ENCODE measurements at regions of chr5 and their contacts with region 1.

Region 1: DNA sequence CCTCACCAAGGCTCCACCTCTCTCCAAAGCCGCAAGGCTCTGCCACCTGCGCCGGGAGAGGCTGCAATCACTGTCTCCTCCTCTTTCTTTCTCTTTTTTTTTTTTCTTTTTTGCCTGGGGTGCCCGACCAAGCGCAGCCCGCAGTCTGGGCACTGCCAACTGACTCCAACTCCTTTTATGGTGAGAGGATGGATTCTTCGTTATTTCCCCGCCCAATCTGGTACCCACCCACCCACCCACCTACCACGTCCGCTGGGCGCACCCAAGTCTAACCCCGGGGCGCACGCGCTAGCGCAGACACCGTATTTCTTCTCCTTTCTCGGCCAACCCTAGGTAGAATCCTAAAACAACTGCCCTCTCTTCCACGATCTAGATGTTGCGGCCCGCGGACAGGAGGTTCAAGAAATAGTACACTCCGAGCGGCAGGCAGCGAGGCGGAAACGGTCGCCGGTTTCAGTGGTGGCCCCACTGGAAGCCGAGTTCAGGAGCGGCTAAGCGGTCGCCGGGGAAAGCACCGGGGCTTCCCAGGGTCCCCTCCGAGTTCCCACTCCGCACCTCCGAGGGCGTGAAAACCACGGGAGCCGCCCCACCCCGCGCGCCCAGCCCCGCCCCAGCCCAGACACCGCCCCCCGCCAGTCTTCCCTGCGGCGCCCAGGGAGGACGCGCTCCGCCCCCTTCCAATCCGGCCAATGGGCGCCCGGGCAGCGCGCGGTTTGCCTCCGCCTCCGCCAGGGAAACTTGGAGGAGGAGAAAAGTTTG is 381 bp upstream of the PTGER4 start:
- DNase-seq: peak; percentile 97
- H3K4me3 ChIP-seq: peak overlapping the region; percentile 68 to 86 (median 86)
- H3K27ac ChIP-seq: peak overlapping the region; percentile 95
- H3K4me1 ChIP-seq: peaks cover 56% of the 10 kb centered on the region
- H3K27me3 ChIP-seq: no peaks in the 10 kb centered on the region
- CTCF ChIP-seq: no peak

Region 2: GRCh38 chr5:39948867-39949468 is 730.4 kb before region 1 on chr5:
- CTCF ChIA-PET with region 1: no interaction called
- dilution Hi-C with region 1: no loop called
- in situ Hi-C with region 1: loop called in 1 of 2 experiments (anchors 5 kb)
- intact Hi-C with region 1: no loop called
- DNase-seq: peak; percentile 50
- H3K4me3 ChIP-seq: no peak overlapping the region
- H3K27ac ChIP-seq: no peak overlapping the region
- H3K4me1 ChIP-seq: no peaks in the 10 kb centered on the region
- H3K27me3 ChIP-seq: no peaks in the 10 kb centered on the region
- CTCF ChIP-seq: peak; percentile 62 to 67

Region 3: DNA sequence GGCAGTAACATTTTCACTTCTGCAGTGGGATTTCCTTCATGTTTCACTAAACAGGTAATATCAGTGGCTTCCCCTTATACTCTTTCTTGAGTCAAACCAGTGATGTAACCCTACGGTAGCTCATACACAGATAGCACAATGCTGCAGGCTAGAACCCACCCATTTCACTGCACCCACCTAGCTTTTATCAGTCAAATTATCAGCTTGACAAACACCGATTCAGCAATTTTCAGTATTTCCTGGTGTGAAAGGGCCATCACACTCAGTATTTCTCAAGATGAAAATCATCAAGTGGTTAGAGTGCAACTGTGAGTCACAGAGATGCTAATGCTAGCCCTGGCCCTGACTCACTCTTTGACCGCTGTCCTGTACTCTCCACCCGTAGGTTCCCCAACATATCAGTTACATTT is 241.9 kb before region 1 on chr5:
- CTCF ChIA-PET with region 1: no interaction called
- dilution Hi-C with region 1: no loop called
- in situ Hi-C with region 1: no loop called
- intact Hi-C with region 1: loop called (anchors 5 kb)
- DNase-seq: peak; percentile 77
- H3K4me3 ChIP-seq: no peak overlapping the region
- H3K27ac ChIP-seq: no peak overlapping the region
- H3K4me1 ChIP-seq: peaks cover 13% of the 10 kb centered on the region
- H3K27me3 ChIP-seq: no peaks in the 10 kb centered on the region
- CTCF ChIP-seq: no peak

Region 4: GRCh38 chr5:40502736-40503135 is 176.6 kb before region 1 on chr5:
- CTCF ChIA-PET with region 1: no interaction called
- dilution Hi-C with region 1: no loop called
- in situ Hi-C with region 1: loop called (anchors 10 kb)
- intact Hi-C with region 1: loop called (anchors 2 kb)
- DNase-seq: no peak
- H3K4me3 ChIP-seq: no peak overlapping the region
- H3K27ac ChIP-seq: no peak overlapping the region
- H3K4me1 ChIP-seq: no peaks in the 10 kb centered on the region
- H3K27me3 ChIP-seq: no peaks in the 10 kb centered on the region
- CTCF ChIP-seq: no peak

Region 5: DNA sequence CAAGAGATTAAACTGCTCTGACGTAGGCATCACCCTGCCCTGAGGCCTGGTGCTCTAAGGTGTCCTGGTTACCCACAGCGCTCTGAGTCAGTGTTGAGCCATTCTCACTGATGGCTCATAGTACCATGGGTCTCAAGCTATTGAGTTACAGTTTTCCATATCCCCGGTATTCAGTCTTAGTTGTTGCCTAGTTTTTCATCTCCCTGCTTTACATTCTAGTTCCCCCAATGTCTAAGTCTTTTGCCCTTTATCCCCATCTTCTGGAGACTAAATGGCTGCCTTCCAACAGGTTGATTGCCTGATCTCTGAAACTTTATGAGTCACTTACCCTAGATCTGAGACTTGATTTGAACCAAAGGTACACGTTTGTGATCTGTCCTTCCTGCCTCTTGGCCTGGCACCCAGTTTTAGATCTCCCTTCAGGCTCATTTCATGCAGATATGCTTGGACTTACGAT is 160.8 kb before region 1 on chr5:
- CTCF ChIA-PET with region 1: no interaction called
- dilution Hi-C with region 1: no loop called
- in situ Hi-C with region 1: no loop called
- intact Hi-C with region 1: loop called (anchors 2 kb)
- DNase-seq: peak; percentile 98
- H3K4me3 ChIP-seq: no peak overlapping the region
- H3K27ac ChIP-seq: peak overlapping the region; percentile 75
- H3K4me1 ChIP-seq: peaks cover 20% of the 10 kb centered on the region
- H3K27me3 ChIP-seq: no peaks in the 10 kb centered on the region
- CTCF ChIP-seq: no peak

Region 6: GRCh38 chr5:40551496-40552491 is 127.5 kb before region 1 on chr5:
- CTCF ChIA-PET with region 1: no interaction called
- dilution Hi-C with region 1: no loop called
- in situ Hi-C with region 1: no loop called
- intact Hi-C with region 1: loop called (anchors 5 kb)
- DNase-seq: peak; percentile 85
- H3K4me3 ChIP-seq: no peak overlapping the region
- H3K27ac ChIP-seq: peak overlapping the region; percentile 96
- H3K4me1 ChIP-seq: peaks cover 15% of the 10 kb centered on the region
- H3K27me3 ChIP-seq: no peaks in the 10 kb centered on the region
- CTCF ChIP-seq: no peak

Region 7: DNA sequence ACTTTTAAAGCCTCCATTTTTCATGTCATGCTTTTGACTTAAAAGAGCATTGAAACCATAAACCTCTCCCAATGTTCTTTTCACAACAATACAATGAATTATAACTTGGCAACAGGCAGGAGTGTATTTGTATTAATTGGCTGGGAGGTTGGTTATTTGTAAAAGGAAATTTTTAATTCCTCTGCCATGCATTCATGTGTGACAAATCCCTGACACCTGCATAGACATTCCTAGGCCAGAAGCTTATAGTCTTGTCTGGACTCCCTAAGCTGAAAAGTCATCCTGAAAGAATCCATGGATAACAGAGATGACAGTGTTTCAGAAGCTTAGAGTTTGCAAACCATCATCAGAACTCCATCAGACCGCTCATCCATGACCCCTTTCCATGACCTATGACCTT is 76.0 kb before region 1 on chr5:
- CTCF ChIA-PET with region 1: no interaction called
- dilution Hi-C with region 1: no loop called
- in situ Hi-C with region 1: no loop called
- intact Hi-C with region 1: loop called (anchors 5 kb)
- DNase-seq: peak; percentile 43
- H3K4me3 ChIP-seq: no peak overlapping the region
- H3K27ac ChIP-seq: peak overlapping the region; percentile 31
- H3K4me1 ChIP-seq: peaks cover 38% of the 10 kb centered on the region
- H3K27me3 ChIP-seq: no peaks in the 10 kb centered on the region
- CTCF ChIP-seq: no peak

Region 8: DNA sequence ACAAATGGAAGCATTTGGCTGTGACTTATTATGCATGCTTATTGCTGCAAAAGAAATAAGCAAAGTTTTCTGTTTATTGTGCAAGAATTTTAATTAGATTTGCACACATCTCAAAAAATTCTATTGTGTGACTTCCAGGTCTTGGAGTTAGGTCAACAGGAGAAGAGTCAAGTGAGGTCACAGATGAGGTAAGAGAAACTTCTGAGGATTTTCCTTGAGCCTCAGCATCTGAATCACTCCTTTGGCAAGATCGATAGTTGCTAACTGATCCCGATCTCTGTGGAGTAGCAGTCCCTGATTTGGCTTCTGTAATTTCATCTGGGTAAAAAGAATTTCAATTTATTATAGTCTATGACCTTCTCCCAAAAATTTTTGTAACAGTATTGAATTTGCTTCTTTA is 83.4 kb after region 1 on chr5:
- CTCF ChIA-PET with region 1: no interaction called
- dilution Hi-C with region 1: no loop called
- in situ Hi-C with region 1: no loop called
- intact Hi-C with region 1: no loop called
- DNase-seq: no peak
- H3K4me3 ChIP-seq: no peak overlapping the region
- H3K27ac ChIP-seq: no peak overlapping the region
- H3K4me1 ChIP-seq: no peaks in the 10 kb centered on the region
- H3K27me3 ChIP-seq: no peaks in the 10 kb centered on the region
- CTCF ChIP-seq: no peak

Measured in mammary epithelial cell (primary cell).